Kidney (tissue), 22 donors: ENCODE measurements at regions of chr14 and their contacts with region 1.

Region 1: DNA sequence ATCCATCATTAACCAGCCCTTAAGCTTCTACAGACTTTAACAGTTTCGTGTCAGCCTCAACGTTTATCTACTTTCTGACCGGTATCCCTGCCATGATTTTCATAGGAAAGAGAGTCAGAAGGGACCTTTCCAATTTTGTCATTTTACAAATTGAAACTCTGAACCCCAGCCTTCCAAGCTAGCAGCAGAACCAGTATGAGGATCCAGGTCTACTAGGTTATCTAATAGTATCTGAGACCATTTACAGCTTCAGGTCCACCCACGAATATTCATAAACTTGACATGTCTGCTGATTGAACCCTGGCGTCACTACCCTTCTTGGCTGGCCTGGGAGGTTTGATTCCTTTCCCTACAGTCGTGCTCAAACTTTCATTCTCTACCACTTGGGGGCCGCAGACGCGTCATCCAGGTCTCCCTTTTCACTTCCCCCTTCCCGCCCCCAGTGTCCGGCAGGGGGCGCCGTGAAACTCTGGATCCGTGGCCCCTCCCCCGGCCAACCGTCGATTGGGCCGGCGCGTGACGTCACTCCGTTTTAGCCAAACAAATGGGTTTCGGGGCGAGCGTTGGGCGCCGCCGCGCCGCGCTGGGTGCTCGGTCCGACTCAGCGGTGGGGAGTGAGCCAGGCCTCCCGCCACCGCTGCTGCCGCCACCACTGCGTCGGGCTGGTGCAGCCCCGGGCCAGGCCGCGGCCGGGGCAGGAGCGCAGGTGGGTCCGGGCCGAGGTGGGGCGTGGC is at the start of gene FBXO34:
- DNase-seq: peak; percentile 99 to 100 (median 99)
- H3K4me3 ChIP-seq: peak within 1 kb of the TSS; percentile 75 to 93 (median 92)
- H3K27ac ChIP-seq: peak within 1 kb of the TSS; percentile 94
- H3K4me1 ChIP-seq: peaks cover 3 to 19% (median 9%) of the 10 kb centered on the region in 3 donors
- H3K27me3 ChIP-seq: no peaks in the 10 kb centered on the region
- CTCF ChIP-seq: peak; percentile 99
- total RNA-seq, gene FBXO34: 38.5 TPM

Region 2: DNA sequence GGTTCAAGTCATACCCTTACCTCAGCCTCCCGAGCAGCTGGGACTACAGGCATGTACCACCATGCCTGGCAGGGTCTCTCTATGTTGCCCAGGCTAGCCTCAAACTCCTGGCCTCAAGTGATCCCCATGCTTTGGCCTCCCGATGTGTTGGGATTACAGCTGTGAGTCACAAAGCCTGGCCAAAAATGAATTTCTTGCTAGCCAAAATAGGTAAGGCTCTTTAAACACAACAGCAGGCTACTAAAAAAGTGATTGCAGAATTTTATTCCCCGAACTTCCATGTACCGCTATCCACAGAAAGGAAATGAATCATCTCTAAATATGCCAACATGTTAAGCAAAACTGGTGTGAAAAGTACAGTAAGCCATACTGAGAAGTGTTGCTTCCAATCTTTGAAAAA is 294.7 kb before region 1 on chr14:
- intact Hi-C with region 1: no loop called
- DNase-seq: no peak
- H3K4me3 ChIP-seq: no peak overlapping the region
- H3K27ac ChIP-seq: no peak overlapping the region
- H3K4me1 ChIP-seq: no peaks in the 10 kb centered on the region
- H3K27me3 ChIP-seq: no peaks in the 10 kb centered on the region
- CTCF ChIP-seq: no peak

Region 3: DNA sequence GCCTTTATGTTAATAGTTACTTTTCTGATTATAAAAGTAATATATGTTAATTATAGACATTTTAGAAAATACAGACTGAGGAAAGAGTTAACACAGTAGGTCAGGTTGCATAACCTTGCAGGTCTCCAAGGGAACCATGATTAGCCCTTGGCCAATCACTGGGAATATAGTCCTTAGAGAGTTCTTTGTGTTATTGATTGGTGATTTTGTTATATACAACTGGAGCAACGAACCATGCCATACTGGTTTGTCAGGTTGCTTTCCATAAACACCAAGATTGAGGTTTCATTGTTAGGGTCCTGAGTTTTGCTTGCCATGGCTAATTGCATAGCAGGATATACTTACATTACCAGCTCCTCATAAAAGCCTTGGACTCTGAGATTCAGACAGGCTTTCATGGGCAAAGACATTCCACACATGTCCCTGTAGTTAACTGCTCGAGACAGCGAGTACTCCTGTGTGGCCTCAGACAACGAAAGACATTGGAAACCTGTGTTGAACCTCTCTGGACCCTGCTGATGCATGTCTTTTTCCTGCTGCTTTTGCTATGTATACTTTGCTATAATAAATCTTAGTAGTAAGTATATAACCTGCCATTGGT is 185.8 kb before region 1 on chr14:
- intact Hi-C with region 1: no loop called
- DNase-seq: no peak
- H3K4me3 ChIP-seq: no peak overlapping the region
- H3K27ac ChIP-seq: no peak overlapping the region
- H3K4me1 ChIP-seq: no peaks in the 10 kb centered on the region
- H3K27me3 ChIP-seq: no peaks in the 10 kb centered on the region
- CTCF ChIP-seq: no peak

Region 4: DNA sequence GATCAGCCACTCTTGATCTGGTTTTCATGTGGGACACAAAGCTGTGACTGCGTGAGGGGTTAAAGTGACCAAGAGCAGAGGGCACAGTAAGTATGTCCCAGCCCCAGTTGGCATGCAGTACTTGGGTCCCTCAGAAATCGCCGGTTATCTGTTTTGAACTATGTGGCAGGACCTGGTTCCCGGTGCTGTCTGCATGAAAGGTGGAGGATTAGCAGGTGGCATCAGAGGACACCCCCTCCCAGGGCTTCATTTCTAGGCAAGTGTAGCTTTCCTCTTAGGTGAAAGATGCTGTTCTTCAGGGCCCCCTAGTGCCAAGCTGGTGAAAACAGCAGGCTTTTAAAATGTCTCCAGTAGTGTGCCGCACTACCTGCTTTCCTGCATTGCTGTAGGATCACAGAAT is 83.5 kb after region 1 on chr14:
- intact Hi-C with region 1: loop called (anchors 10 kb)
- DNase-seq: peak in 4 of 5 donors; percentile 57 to 86 (median 66)
- H3K4me3 ChIP-seq: no peak overlapping the region
- H3K27ac ChIP-seq: no peak overlapping the region
- H3K4me1 ChIP-seq: peaks cover 2 to 16% (median 6%) of the 10 kb centered on the region in 3 donors
- H3K27me3 ChIP-seq: no peaks in the 10 kb centered on the region
- CTCF ChIP-seq: peak; percentile 61

Region 5: DNA sequence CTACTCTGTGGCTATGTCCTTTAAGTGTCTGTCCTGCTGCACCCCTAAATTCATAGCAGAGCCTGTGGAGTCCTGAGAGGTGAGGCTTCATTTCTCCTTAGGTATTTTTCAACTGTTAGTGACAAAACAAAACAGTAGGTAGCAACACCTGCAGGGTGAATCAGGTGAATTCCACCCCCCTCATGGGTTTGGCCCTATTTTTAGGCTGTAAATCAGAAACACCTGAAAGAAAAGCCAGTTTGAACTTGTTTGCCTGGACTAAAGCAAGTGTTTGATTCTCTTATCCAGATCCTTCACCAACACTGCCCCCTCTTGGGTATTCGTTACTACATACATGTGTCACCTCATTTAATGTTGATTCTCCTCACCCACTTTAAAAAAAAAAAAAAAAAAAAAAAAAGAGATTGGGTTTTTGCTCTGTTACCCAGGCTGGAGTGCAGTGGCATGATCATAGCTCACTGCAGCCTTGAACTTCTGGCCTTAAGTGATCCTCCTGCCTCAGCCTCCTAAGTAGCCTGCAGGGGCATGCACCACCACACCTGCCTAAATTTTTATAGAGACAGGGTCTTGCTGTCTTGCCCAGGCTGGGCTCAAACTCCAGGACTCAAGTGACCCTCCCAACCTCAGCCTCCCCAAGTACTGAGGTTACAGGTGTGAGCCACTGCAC is 159.2 kb after region 1 on chr14:
- intact Hi-C with region 1: no loop called
- DNase-seq: peak in 3 of 5 donors; percentile 38 to 80 (median 63)
- H3K4me3 ChIP-seq: no peak overlapping the region
- H3K27ac ChIP-seq: no peak overlapping the region
- H3K4me1 ChIP-seq: peaks cover 0 to 3% (median 0%) of the 10 kb centered on the region in 3 donors
- H3K27me3 ChIP-seq: no peaks in the 10 kb centered on the region
- CTCF ChIP-seq: peak; percentile 31